Endothelial cell of umbilical vein (primary cell): ENCODE measurements at regions of chr15 and their contacts with region 1.

Region 1: GRCh38 chr15:33126559-33127290 is 67.8 kb downstream of the FMN1 start:
- DNase-seq: peak; percentile 97
- H3K4me3 ChIP-seq: peak overlapping the region in 1 of 3 experiments; percentile 29
- H3K27ac ChIP-seq: peak overlapping the region; percentile 13
- H3K4me1 ChIP-seq: peaks cover 19% of the 10 kb centered on the region
- H3K27me3 ChIP-seq: no peaks in the 10 kb centered on the region
- CTCF ChIP-seq: no peak
- POLR2A ChIP-seq: no peak

Region 2: DNA sequence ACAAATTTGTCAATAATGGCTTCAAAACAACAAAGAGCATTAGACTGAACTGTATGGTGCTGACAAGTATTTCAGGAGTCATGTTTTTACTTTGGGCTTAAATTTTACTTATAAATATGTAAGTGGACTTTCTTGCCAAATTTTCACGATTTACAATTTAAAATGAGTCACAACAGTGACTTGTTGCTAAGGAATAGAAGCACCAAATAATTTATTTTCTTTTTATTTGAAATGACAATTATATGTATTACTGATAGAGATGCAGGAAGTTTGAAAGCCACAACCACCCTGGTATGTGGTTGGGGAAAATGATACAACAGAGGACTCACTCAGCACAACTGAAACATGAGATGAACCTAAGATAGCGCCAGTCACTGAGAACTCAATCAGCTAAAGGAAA is 22.5 kb before region 1 on chr15:
- CTCF ChIA-PET with region 1: interaction called, 21 read pairs
- POLR2A ChIA-PET with region 1: no interaction called
- dilution Hi-C with region 1: no loop called
- intact Hi-C with region 1: loop called (anchors 1 kb)
- DNase-seq: peak; percentile 72
- H3K4me3 ChIP-seq: no peak overlapping the region
- H3K27ac ChIP-seq: no peak overlapping the region
- H3K4me1 ChIP-seq: peaks cover 3% of the 10 kb centered on the region
- H3K27me3 ChIP-seq: no peaks in the 10 kb centered on the region
- CTCF ChIP-seq: no peak
- POLR2A ChIP-seq: no peak

Region 3: DNA sequence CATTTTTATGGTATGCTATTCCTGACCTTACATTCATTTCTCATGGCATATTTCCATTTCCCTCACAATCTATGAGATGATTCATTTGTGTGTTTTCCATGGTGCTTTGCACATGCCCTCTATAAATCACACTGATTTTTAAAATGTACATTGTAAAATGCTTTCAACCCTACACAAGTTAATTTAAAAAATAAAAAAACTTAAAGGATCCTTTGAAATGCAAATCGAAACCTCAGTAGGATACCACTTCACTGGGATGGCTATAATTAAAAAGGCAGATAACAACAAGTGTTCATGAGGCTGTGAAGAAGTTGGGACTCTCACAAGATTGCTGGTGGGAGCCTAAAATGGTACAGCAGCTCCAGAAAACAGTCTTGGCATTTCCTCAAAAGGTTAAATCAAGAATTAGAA is 15.7 kb before region 1 on chr15:
- CTCF ChIA-PET with region 1: interaction called, 21 read pairs
- POLR2A ChIA-PET with region 1: no interaction called
- dilution Hi-C with region 1: no loop called
- intact Hi-C with region 1: loop called (anchors 1 kb)
- DNase-seq: peak; percentile 80
- H3K4me3 ChIP-seq: no peak overlapping the region
- H3K27ac ChIP-seq: no peak overlapping the region
- H3K4me1 ChIP-seq: peaks cover 5% of the 10 kb centered on the region
- H3K27me3 ChIP-seq: no peaks in the 10 kb centered on the region
- CTCF ChIP-seq: no peak
- POLR2A ChIP-seq: no peak

Region 4: DNA sequence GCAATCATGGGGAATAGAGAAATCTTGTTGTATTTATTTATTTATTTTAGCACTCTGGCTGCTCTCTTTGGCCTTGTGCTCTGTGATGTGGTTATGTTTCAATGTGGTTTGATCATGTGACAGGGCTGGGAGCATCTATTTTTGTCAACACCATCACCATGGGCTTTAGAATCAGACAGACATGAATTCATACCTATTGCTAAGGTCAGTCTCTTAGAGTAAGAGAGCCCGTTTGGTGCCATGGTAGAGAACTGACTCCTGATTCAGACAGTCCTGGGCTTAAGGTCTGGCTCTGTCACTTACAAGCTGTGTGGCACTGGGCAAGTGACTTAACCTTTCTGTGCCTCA is 341.1 kb after region 1 on chr15:
- CTCF ChIA-PET with region 1: no interaction called
- POLR2A ChIA-PET with region 1: no interaction called
- dilution Hi-C with region 1: no loop called
- intact Hi-C with region 1: no loop called
- DNase-seq: no peak
- H3K4me3 ChIP-seq: no peak overlapping the region
- H3K27ac ChIP-seq: no peak overlapping the region
- H3K4me1 ChIP-seq: no peaks in the 10 kb centered on the region
- H3K27me3 ChIP-seq: no peaks in the 10 kb centered on the region
- CTCF ChIP-seq: no peak
- POLR2A ChIP-seq: no peak

Region 5: GRCh38 chr15:33722005-33722672 is 595.4 kb after region 1 on chr15:
- CTCF ChIA-PET with region 1: no interaction called
- POLR2A ChIA-PET with region 1: no interaction called
- dilution Hi-C with region 1: no loop called
- intact Hi-C with region 1: loop called (anchors 10 kb)
- DNase-seq: peak; percentile 78
- H3K4me3 ChIP-seq: no peak overlapping the region
- H3K27ac ChIP-seq: peak overlapping the region; percentile 96
- H3K4me1 ChIP-seq: peaks cover 51% of the 10 kb centered on the region
- H3K27me3 ChIP-seq: no peaks in the 10 kb centered on the region
- CTCF ChIP-seq: no peak
- POLR2A ChIP-seq: no peak